ENCODE measurements at regions of chr7 and their contacts with region 1.

Region 1: GRCh38 chr7:143408686-143409561 is at the start of gene EPHA1:
- H3K4me3 ChIP-seq: peak within 1 kb of the TSS; percentile 30
- H3K27ac ChIP-seq: no peak within 1 kb of the TSS
- H3K4me1 ChIP-seq: peaks cover 2% of the 10 kb centered on the region; the same call in 1 of the 2 replicates
- CTCF ChIP-seq: no peak

Region 2: GRCh38 chr7:143247372-143247771 is 161.6 kb before region 1 on chr7:
- CTCF ChIA-PET with region 1: no interaction called
- POLR2A ChIA-PET with region 1: no interaction called
- H3K4me3 ChIP-seq: no peak overlapping the region
- H3K27ac ChIP-seq: no peak overlapping the region
- H3K4me1 ChIP-seq: no peaks in the 10 kb centered on the region
- CTCF ChIP-seq: no peak

Region 3: GRCh38 chr7:143380255-143380645 is 28.7 kb before region 1 on chr7:
- CTCF ChIA-PET with region 1: interaction called, 7 read pairs
- POLR2A ChIA-PET with region 1: interaction called, 10 read pairs
- H3K4me3 ChIP-seq: peak overlapping the region; percentile 85
- H3K27ac ChIP-seq: peak overlapping the region; percentile 94
- H3K4me1 ChIP-seq: peaks cover 3% of the 10 kb centered on the region; the same call in 1 of the 2 replicates
- CTCF ChIP-seq: peak; percentile 91

Region 4: DNA sequence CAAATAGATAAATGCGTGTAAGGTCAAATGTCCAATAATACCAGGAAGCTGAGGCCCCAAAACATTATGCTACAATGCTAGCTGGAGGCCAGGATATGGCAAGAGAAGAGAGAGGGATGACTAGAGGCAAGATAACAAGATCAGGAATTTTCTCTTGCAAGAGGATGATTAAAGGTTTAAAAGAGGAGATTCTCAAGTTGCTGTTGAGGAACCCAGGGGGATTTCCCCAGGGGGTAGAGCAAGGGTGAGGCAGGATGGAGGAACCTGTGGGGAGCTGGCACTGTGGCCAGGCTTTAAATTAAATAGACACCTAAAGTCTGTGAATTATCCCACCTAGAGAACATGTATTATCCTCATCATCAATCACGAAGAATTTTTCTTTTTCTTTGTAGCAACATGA is 30.9 kb after region 1 on chr7:
- CTCF ChIA-PET with region 1: no interaction called
- POLR2A ChIA-PET with region 1: no interaction called
- H3K4me3 ChIP-seq: no peak overlapping the region
- H3K27ac ChIP-seq: no peak overlapping the region
- H3K4me1 ChIP-seq: no peaks in the 10 kb centered on the region
- CTCF ChIP-seq: no peak

Region 5: DNA sequence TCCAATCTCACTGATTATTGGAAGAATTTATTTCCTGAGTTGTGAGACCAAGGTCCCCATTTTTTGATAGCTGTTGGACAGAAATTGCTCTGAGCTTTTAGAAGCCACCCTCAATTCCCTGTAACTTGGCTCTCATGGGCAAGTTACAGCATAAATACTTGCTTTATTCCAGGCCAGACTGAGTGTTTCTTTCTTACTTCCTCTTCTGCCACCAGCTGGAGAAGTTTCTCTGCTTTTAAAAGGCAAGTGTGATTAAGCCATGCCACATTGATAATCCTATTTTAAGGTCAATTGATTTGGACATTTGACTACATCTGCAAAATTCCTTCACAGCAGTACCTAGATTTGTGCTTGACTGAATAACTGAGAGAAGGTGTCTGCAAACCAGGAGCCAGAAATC is 54.6 kb after region 1 on chr7:
- CTCF ChIA-PET with region 1: no interaction called
- POLR2A ChIA-PET with region 1: no interaction called
- H3K4me3 ChIP-seq: no peak overlapping the region
- H3K27ac ChIP-seq: no peak overlapping the region
- H3K4me1 ChIP-seq: no peaks in the 10 kb centered on the region
- CTCF ChIP-seq: no peak

Region 6: GRCh38 chr7:143484119-143484518 is 75.2 kb after region 1 on chr7:
- CTCF ChIA-PET with region 1: no interaction called
- POLR2A ChIA-PET with region 1: no interaction called
- H3K4me3 ChIP-seq: no peak overlapping the region
- H3K27ac ChIP-seq: no peak overlapping the region
- H3K4me1 ChIP-seq: no peaks in the 10 kb centered on the region
- CTCF ChIP-seq: no peak

Measured in HEK293 (cell line).